Breast epithelium (tissue), 4 donors: ENCODE measurements at regions of chr3 and their contacts with region 1.

Region 1: GRCh38 chr3:105579439-105579838 is 212.7 kb downstream of the ALCAM start:
- DNase-seq: no peak
- H3K4me3 ChIP-seq: no peak overlapping the region
- H3K27ac ChIP-seq: no peak overlapping the region
- H3K4me1 ChIP-seq: no peaks in the 10 kb centered on the region
- H3K27me3 ChIP-seq: no peaks in the 10 kb centered on the region
- CTCF ChIP-seq: no peak
- POLR2A ChIP-seq: no peak

Region 2: DNA sequence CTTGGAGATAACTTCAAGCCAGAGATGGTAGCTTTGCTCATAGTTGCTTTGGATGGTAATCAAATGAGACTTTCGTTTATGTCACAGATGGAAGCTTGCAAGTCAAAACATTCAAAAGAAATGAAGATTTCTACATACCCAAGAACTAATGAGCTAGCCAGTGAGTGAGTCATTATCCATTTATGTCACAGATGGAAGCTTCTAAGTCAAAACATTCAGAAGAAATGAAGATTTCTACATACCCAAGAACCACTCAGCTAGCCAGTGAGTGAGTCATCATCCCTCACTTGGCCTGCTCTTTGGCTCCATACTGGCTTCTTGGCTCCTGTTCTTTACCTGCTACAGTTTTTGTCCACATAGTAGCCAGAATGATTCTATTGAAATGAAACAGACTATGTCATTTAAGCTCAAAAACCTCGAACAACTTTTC is 849.1 kb after region 1 on chr3:
- intact Hi-C with region 1: loop called (anchors 5 kb)
- DNase-seq: no peak
- H3K4me3 ChIP-seq: no peak overlapping the region
- H3K27ac ChIP-seq: no peak overlapping the region
- H3K4me1 ChIP-seq: no peaks in the 10 kb centered on the region
- H3K27me3 ChIP-seq: no peaks in the 10 kb centered on the region
- CTCF ChIP-seq: no peak
- POLR2A ChIP-seq: no peak